ENCODE measurements at regions of chr19 and their contacts with region 1.

Region 1: GRCh38 chr19:6021878-6022569 is 44.1 kb upstream of the RANBP3 start:
- DNase-seq: peak; percentile 92
- ATAC-seq: peak; percentile 97
- H3K4me3 Mint-ChIP-seq: no peak overlapping the region
- H3K27ac Mint-ChIP-seq: no peak overlapping the region
- H3K4me1 Mint-ChIP-seq: peaks cover 2% of the 10 kb centered on the region
- H3K27me3 Mint-ChIP-seq: no peaks in the 10 kb centered on the region
- CTCF ChIP-seq: peak; percentile 74

Region 2: DNA sequence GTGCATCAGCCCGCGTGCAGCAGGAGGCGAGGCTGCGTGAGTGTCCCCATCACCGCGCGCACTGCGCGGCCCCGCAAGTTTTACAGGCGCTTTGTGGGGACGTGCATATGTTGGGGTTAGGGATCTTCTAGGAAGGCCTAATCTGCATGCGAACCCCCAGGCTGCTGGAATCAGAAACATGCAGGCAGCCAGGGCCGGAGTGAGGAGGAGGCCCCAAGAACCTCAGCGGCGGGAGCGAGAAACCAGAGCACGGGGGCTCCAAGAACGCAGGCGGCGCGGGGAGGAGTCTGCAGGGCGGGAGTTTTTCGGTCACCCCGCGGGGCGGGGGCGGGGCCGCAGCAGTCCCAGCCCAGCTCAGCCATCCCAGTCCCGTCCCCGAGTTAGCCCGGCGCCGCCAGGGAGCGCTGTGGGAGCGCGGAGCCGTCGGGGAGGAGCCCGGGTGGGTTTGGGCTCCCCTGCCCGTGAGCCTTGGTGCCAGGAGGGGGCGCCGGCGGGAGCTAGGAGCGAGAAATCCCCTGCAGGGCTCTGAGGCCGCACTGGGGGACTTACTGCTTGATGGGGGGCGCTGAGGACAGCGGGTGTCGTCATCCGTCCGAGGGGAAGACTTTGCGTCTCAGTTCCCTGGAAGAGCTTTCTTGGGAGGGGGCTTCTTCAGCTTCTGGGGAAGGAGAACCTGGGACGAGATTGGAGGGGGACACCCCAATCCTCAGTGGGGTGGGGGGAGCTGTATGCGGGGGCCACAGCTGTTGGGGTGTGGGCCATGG is 218.1 kb before region 1 on chr19:
- CTCF ChIA-PET with region 1: interaction called, 47 read pairs
- POLR2A ChIA-PET with region 1: interaction called, 6 read pairs
- intact Hi-C with region 1: no loop called
- DNase-seq: peak; percentile 96
- ATAC-seq: peak; percentile 98
- H3K4me3 Mint-ChIP-seq: peak overlapping the region; percentile 69
- H3K27ac Mint-ChIP-seq: peak overlapping the region; percentile 76
- H3K4me1 Mint-ChIP-seq: peaks cover 22% of the 10 kb centered on the region
- H3K27me3 Mint-ChIP-seq: peaks cover 25% of the 10 kb centered on the region
- CTCF ChIP-seq: peak; percentile 93

Region 3: DNA sequence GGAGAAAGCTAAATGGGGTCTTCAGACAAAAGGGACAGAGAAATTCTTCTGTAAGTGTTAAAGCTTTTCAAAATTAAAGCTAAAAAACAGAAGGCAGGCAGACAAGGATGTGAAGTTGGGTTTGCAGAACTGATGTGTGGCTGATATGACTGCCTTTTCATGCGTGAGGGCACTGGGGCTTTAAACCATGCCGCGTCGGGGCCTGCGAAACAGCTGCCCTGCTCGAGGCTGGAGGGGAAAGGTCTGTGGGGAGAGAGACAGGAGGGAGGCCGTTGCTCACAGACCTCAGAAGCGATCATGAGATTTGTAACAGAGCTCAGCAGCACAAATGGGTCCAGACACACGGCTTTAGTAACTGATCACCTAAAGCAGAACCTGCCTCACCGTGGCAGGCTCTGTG is 84.5 kb before region 1 on chr19:
- CTCF ChIA-PET with region 1: interaction called, 12 read pairs
- POLR2A ChIA-PET with region 1: no interaction called
- intact Hi-C with region 1: no loop called
- DNase-seq: no peak
- ATAC-seq: no peak
- H3K4me3 Mint-ChIP-seq: no peak overlapping the region
- H3K27ac Mint-ChIP-seq: no peak overlapping the region
- H3K4me1 Mint-ChIP-seq: no peaks in the 10 kb centered on the region
- H3K27me3 Mint-ChIP-seq: no peaks in the 10 kb centered on the region
- CTCF ChIP-seq: no peak

Region 4: GRCh38 chr19:5967994-5968430 is 54.0 kb before region 1 on chr19:
- CTCF ChIA-PET with region 1: interaction called, 39 read pairs
- POLR2A ChIA-PET with region 1: interaction called, 3 read pairs
- intact Hi-C with region 1: no loop called
- DNase-seq: peak; percentile 78
- ATAC-seq: peak; percentile 86
- H3K4me3 Mint-ChIP-seq: no peak overlapping the region
- H3K27ac Mint-ChIP-seq: peak overlapping the region; percentile 83
- H3K4me1 Mint-ChIP-seq: peaks cover 86% of the 10 kb centered on the region
- H3K27me3 Mint-ChIP-seq: no peaks in the 10 kb centered on the region
- CTCF ChIP-seq: peak; percentile 94

Region 5: DNA sequence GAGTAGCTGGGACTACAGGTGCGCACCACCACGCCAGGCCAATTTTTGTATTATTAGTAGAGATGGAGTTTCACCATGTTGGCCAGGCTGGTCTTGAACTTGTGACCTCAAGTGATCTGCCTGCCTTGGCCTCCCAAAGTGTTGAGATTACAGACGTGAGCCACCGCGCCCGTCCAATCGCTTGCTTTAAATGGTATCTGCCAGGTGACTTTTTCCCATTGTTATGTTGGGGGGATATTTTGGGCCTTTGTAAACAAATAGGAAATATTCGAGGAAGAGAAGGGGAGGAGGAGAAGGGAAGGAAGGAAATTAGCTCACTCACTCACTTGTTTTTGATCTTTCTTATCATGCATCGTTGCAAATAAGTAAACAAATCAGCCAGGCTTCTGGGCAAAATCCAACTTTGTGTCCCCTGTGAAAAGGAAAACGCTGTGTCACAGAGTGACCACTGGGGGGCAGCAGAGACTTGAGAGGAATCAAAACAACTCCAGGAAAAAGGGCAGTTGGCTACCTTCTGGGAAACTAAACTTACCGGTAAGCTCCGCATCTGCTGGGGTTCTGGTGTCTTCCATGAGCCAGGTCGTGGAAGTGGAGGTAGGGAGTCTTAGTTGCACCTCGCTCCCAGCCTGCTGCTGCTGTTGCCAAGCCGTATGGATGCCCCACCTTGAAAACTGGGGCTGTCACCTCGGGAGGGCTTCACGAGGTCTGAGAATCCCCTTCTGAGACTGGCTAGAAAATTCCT is 34.8 kb before region 1 on chr19:
- CTCF ChIA-PET with region 1: interaction called, 91 read pairs
- POLR2A ChIA-PET with region 1: interaction called, 3 read pairs
- intact Hi-C with region 1: loop called (anchors 2 kb)
- DNase-seq: peak; percentile 80
- ATAC-seq: peak; percentile 57
- H3K4me3 Mint-ChIP-seq: peak overlapping the region; percentile 54
- H3K27ac Mint-ChIP-seq: peak overlapping the region; percentile 67
- H3K4me1 Mint-ChIP-seq: peaks cover 35% of the 10 kb centered on the region
- H3K27me3 Mint-ChIP-seq: peaks cover 3% of the 10 kb centered on the region
- CTCF ChIP-seq: peak; percentile 95

Region 6: DNA sequence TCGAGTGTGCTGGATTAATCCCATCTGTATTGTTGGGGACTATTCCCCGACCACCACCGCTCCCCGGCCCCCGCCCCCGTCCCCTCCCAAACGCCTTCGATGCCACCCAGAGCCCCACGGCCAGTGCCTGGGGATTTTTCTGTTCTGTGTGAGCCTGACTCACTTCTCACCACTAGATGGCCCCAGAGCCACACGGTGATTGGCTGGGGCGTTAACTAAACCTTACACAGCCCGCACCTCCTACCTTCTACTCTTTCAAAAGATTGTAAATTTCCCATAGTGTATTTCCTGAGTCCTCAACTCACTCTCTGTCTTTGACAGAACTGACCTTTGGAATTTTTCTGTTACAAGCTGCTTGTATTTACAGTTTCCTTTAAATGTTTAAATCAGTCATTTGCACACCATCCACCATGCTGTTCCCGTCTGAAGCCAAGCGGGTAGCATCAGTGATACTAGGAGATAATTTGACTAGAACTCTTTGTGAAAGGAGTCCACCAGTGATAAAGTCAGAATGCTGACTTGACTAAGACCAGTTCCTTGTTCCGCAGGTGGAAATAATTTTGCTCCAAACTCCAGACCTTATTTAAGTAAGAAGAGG is 26.9 kb after region 1 on chr19:
- CTCF ChIA-PET with region 1: interaction called, 10 read pairs
- POLR2A ChIA-PET with region 1: no interaction called
- intact Hi-C with region 1: no loop called
- DNase-seq: peak; percentile 87
- ATAC-seq: peak; percentile 100
- H3K4me3 Mint-ChIP-seq: no peak overlapping the region
- H3K27ac Mint-ChIP-seq: no peak overlapping the region
- H3K4me1 Mint-ChIP-seq: peaks cover 3% of the 10 kb centered on the region
- H3K27me3 Mint-ChIP-seq: no peaks in the 10 kb centered on the region
- CTCF ChIP-seq: peak; percentile 85

Region 7: DNA sequence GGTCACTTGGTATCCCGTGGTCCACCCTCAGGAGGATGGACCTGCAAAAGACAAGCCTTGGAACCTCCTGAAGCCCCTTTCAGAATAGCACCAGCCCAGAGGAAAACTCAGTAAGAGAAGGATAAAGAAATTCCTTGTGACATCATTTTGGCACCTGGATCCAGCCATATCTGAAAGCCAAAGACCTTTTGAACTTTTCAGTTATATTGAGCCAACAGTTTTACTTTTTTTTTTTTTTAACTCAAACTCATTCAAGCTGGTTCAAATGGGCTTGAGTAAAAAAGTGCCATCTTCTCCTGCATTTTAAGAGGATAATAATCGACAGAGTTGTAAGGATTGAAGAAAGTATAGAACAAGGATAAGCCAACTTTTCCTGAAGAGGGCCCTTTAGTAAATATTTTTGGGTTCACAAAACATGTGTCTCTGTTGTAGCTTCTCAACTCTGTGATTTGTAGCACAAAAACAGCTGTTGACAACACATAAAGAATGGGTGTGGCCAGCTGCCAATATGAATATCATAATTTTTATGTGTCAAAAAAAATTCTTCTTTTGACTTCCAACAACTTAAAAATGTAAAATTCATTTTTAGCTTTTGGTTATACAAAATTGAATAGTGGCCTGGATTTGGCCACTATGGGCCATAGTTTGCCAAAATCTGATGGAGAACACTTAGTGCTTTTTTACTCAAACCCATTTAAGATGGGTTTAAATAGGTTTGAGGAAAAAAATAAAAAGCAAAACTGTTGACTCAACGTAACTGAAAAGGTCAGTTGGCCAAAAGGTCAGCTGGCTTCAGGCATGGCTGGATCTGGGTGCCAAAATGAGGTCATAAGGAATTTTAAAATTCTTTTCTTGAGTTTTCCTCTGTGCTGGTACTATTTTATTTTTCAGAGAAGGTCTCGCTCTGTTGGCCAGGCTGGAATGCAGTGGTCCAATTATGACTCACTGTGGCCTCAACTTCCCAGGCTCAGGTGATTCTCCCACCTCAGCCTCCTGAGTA is 164.1 kb after region 1 on chr19:
- CTCF ChIA-PET with region 1: no interaction called
- POLR2A ChIA-PET with region 1: no interaction called
- intact Hi-C with region 1: no loop called
- DNase-seq: no peak
- ATAC-seq: no peak
- H3K4me3 Mint-ChIP-seq: no peak overlapping the region
- H3K27ac Mint-ChIP-seq: no peak overlapping the region
- H3K4me1 Mint-ChIP-seq: peaks cover 6% of the 10 kb centered on the region
- H3K27me3 Mint-ChIP-seq: peaks cover 19% of the 10 kb centered on the region
- CTCF ChIP-seq: no peak

Measured in activated CD8-positive, alpha-beta T cell treated with anti-CD3 and anti-CD28 coated beads for 36 hours (primary cell).